ENCODE measurements at regions of chr19 and their contacts with region 1.

Region 1: DNA sequence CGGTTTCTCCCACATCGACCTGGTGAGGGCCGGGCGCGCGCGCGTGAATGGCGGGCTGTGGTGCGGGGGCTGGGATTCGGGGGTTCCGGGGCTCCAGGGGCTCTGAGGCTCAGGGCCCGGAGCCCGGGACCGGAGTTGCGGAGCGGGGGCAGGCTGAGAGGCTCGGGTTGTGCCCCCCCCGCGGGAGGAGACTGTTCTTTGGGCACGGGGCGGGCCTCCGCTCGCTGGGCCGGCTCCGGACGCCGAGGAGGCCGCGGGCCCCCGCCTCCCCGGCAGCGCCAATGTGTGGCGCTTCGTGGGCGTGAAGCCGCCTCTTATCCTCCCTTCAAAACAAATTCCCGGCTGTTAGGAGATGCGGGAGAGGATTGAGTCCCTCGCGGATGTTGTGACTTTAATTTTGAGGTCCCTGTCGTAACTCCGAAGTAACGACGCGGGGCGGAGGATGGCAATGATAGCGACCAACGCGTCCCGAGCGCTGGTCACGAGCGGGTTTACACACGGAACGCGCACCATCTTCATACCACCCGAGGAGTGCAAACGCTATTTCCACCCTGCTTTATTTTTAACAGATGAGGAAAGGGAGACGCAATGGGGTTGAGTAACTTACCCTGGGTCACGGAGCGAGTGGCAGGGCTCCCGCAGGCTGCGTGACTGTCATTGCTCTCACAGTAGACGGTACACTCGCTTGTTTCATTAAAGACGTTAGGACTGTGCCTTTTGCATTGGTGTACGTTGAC is 536 bp downstream of the UBA2 start:
- DNase-seq: peak; percentile 17
- ATAC-seq: peak; percentile 73
- H3K4me3 ChIP-seq: peak overlapping the region; percentile 99
- H3K27ac ChIP-seq: peak overlapping the region; percentile 84
- H3K4me1 ChIP-seq: peaks cover 18% of the 10 kb centered on the region
- H3K27me3 ChIP-seq: no peaks in the 10 kb centered on the region
- CTCF ChIP-seq: no peak
- POLR2A ChIP-seq: no peak
- RAD21 ChIP-seq: no peak

Region 2: DNA sequence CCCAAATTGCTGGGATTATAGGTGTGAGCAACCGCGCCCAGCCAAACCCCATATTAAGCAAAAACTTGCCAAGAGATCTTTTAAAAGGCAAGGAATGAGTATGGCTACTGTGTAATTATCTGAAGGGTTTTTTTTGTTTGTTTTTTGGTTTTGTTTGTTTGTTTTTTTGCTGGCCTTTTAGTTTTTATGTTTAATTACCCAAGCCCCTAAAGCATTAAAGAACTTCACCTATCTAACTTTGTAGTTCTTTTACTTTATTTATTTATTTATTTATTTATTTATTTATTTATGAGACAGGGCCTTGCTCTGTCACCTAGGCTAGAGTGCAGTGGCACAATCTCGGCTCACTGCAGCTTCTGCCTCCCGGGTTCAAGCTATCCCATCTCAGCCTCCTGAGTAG is 214.7 kb before region 1 on chr19:
- CTCF ChIA-PET with region 1: no interaction called
- POLR2A ChIA-PET with region 1: no interaction called
- dilution Hi-C with region 1: no loop called
- in situ Hi-C with region 1: no loop called
- intact Hi-C with region 1: no loop called
- DNase-seq: no peak
- ATAC-seq: no peak
- H3K4me3 ChIP-seq: no peak overlapping the region
- H3K27ac ChIP-seq: no peak overlapping the region
- H3K4me1 ChIP-seq: peaks cover 5% of the 10 kb centered on the region
- H3K27me3 ChIP-seq: no peaks in the 10 kb centered on the region
- CTCF ChIP-seq: no peak
- POLR2A ChIP-seq: no peak
- RAD21 ChIP-seq: no peak

Region 3: DNA sequence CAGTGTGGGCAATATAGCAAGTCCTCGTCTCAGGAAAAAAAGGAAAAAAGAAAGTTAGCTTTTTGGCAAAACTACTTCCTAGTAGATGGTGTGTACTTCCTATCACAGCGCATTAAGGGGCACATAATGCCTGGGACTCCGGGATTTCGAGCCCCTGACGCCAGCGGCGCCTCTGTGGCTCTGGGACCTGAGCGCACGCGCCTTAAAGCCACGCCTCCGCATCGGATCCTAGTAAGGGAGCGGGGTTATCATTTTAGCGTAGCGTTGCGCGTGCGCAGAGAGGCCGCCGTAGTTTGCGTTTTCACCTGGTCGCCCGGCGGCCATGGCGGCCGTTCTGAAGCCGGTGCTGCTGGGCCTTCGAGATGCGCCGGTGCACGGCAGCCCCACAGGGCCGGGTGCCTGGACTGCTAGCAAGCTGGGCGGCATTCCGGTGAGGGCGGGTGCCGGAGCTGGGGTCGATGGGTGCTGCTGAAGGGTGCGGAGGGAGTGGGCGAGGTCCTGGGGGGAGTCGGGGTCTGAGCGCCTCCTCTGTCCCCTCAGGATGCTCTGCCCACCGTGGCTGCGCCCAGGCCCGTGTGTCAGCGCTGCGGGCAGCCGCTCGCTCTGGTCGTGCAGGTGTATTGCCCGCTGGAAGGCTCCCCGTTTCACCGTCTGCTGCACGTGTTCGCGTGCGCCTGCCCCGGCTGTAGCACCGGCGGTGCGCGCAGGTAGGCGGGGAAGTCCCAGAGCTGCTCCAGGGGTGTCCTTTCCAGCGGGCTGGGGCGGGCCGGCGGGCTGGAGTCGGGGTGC is 24.4 kb before region 1 on chr19 and contains the start of gene PDCD2L:
- CTCF ChIA-PET with region 1: interaction called, 5 read pairs
- POLR2A ChIA-PET with region 1: interaction called, 3 read pairs
- dilution Hi-C with region 1: no loop called
- in situ Hi-C with region 1: no loop called
- intact Hi-C with region 1: loop called (anchors 1 kb)
- DNase-seq: peak; percentile 85
- ATAC-seq: peak; percentile 99
- H3K4me3 ChIP-seq: peak within 1 kb of the TSS; percentile 93
- H3K27ac ChIP-seq: peak within 1 kb of the TSS; percentile 59; the same call in 1 of the 2 replicates
- H3K4me1 ChIP-seq: peaks cover 2% of the 10 kb centered on the region; the same call in 1 of the 2 replicates
- H3K27me3 ChIP-seq: no peaks in the 10 kb centered on the region
- CTCF ChIP-seq: no peak
- POLR2A ChIP-seq: no peak
- RAD21 ChIP-seq: 0 out of 2 replicates have a peak, but pooled peaks have one; percentile 13
- total RNA-seq, gene PDCD2L: 10.6 and 12.2 TPM in 2 replicates

Region 4: GRCh38 chr19:34452723-34453122 is 24.0 kb after region 1 on chr19:
- CTCF ChIA-PET with region 1: no interaction called
- POLR2A ChIA-PET with region 1: no interaction called
- dilution Hi-C with region 1: no loop called
- in situ Hi-C with region 1: no loop called
- intact Hi-C with region 1: loop called (anchors 2 kb)
- DNase-seq: peak; percentile 64
- ATAC-seq: peak; percentile 86
- H3K4me3 ChIP-seq: no peak overlapping the region
- H3K27ac ChIP-seq: no peak overlapping the region
- H3K4me1 ChIP-seq: peaks cover 12% of the 10 kb centered on the region
- H3K27me3 ChIP-seq: no peaks in the 10 kb centered on the region
- CTCF ChIP-seq: no peak
- POLR2A ChIP-seq: no peak
- RAD21 ChIP-seq: no peak

Region 5: GRCh38 chr19:34475026-34475974 is 46.6 kb after region 1 on chr19:
- CTCF ChIA-PET with region 1: no interaction called
- POLR2A ChIA-PET with region 1: no interaction called
- dilution Hi-C with region 1: no loop called
- in situ Hi-C with region 1: no loop called
- intact Hi-C with region 1: loop called (anchors 2 kb)
- DNase-seq: peak; percentile 91
- ATAC-seq: peak; percentile 89
- H3K4me3 ChIP-seq: no peak overlapping the region
- H3K27ac ChIP-seq: peak overlapping the region; percentile 71
- H3K4me1 ChIP-seq: peaks cover 6% of the 10 kb centered on the region
- H3K27me3 ChIP-seq: no peaks in the 10 kb centered on the region
- CTCF ChIP-seq: no peak
- POLR2A ChIP-seq: no peak
- RAD21 ChIP-seq: no peak

Region 6: DNA sequence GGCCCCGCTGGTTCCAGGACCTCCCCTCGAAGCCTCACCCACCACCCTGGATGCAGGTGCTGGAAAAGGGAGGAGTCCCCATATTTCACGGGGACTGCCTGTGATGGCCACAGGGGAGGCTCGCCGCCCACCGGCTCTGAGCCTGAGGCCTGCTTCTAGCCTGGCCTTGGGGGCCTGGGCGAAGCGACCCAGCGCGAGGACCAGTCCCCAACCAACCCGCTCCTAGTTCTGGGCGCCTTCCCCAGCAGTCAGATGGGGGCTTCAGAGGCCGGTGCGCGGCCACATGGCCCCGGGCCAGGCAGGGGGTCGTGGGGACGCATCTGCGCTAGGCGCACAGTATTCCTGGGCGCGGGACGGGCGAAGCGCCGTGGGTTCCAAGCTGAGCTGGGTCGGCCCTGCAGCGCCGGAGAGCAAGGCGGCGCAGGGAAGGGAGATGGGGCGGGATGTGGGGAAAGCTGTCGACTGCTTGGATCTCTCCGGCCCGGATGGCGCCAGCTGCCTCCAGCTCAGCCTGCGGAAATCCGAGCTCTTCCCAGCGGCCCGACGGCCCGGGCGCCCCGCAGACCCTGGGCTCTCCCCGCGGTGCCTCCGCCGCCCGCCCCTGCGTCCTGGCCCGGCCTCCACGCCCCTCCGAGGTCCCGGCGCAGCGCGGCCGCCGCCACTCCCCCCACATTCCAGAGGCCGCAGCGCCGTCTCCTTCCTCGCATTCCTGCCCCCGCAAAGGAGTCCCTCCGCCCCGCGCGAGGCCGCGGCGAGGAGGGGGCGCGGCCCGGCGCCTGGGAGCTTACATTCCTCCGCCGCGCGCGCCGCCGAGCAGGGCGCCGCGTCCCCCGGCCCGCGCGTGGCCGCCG is 52.5 kb after region 1 on chr19 and contains the start of gene WTIP:
- CTCF ChIA-PET with region 1: interaction called, 4 read pairs
- POLR2A ChIA-PET with region 1: no interaction called
- dilution Hi-C with region 1: no loop called
- in situ Hi-C with region 1: no loop called
- intact Hi-C with region 1: loop called (anchors 2 kb)
- DNase-seq: peak; percentile 88
- ATAC-seq: peak; percentile 88
- H3K4me3 ChIP-seq: peak within 1 kb of the TSS; percentile 78
- H3K27ac ChIP-seq: peak within 1 kb of the TSS; percentile 93
- H3K4me1 ChIP-seq: peaks cover 14% of the 10 kb centered on the region
- H3K27me3 ChIP-seq: no peaks in the 10 kb centered on the region
- CTCF ChIP-seq: no peak
- POLR2A ChIP-seq: peak; percentile 56
- RAD21 ChIP-seq: no peak
- total RNA-seq, gene WTIP: 35.0 and 48.9 TPM in 2 replicates

Region 7: DNA sequence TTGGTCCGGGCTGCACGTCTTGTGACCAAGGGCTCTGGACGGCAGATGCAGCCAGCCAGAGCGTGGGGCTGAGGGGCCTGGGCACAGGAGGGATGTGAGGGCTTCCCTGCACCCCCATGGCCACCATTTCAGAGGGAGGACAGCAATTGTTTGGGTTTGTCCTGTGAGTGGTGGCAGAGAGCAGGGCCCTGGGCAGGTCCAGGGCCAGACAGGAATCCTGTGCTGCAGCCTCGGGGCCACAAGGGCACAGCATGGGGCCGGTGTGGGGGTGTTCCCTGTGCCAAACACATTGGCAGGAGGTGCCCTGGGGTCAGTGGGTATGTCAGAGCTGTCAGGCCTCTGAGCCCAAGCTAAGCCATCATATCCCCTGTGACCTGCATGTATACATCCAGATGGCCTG is 85.0 kb after region 1 on chr19:
- CTCF ChIA-PET with region 1: no interaction called
- POLR2A ChIA-PET with region 1: no interaction called
- dilution Hi-C with region 1: no loop called
- in situ Hi-C with region 1: no loop called
- intact Hi-C with region 1: no loop called
- DNase-seq: no peak
- ATAC-seq: no peak
- H3K4me3 ChIP-seq: no peak overlapping the region
- H3K27ac ChIP-seq: no peak overlapping the region
- H3K4me1 ChIP-seq: no peaks in the 10 kb centered on the region
- H3K27me3 ChIP-seq: peaks cover 9% of the 10 kb centered on the region; the same call in 1 of the 2 replicates
- CTCF ChIP-seq: no peak
- POLR2A ChIP-seq: no peak
- RAD21 ChIP-seq: no peak